Calu3 (cell line): ENCODE measurements at regions of chr19 and their contacts with region 1.

Region 1: DNA sequence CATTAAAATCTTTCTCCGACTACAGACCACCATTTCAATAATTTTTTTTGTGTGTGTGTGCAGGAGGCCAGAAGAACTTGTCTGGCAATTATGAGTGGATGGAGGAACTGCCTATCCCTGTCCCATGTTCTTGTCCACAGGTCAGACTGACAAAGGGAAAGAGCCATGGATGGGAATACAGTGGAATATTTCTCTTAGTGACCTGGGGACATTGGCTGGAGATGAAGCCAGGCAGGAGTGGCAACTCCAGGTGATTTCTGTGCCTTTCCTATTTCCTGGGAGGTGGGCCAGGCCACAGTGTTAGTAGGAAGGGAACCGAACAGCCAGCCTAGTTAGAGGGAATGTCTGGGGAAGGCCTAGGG is 3.7 kb downstream of the PSG9 start:
- DNase-seq: peak; percentile 22
- H3K4me3 Mint-ChIP-seq: peak overlapping the region; percentile 59
- H3K27ac Mint-ChIP-seq: peak overlapping the region; percentile 100
- H3K4me1 Mint-ChIP-seq: peaks cover 77% of the 10 kb centered on the region
- H3K27me3 Mint-ChIP-seq: no peaks in the 10 kb centered on the region
- CTCF ChIP-seq: no peak

Region 2: GRCh38 chr19:43207991-43208390 is 57.7 kb before region 1 on chr19:
- CTCF ChIA-PET with region 1: no interaction called
- intact Hi-C with region 1: loop called (anchors 10 kb)
- DNase-seq: no peak
- H3K4me3 Mint-ChIP-seq: no peak overlapping the region
- H3K27ac Mint-ChIP-seq: no peak overlapping the region
- H3K4me1 Mint-ChIP-seq: peaks cover 53% of the 10 kb centered on the region
- H3K27me3 Mint-ChIP-seq: no peaks in the 10 kb centered on the region
- CTCF ChIP-seq: no peak

Region 3: GRCh38 chr19:43229315-43229714 is 36.3 kb before region 1 on chr19:
- CTCF ChIA-PET with region 1: no interaction called
- intact Hi-C with region 1: loop called (anchors 2 kb)
- DNase-seq: no peak
- H3K4me3 Mint-ChIP-seq: no peak overlapping the region
- H3K27ac Mint-ChIP-seq: no peak overlapping the region
- H3K4me1 Mint-ChIP-seq: no peaks in the 10 kb centered on the region
- H3K27me3 Mint-ChIP-seq: no peaks in the 10 kb centered on the region
- CTCF ChIP-seq: no peak

Region 4: DNA sequence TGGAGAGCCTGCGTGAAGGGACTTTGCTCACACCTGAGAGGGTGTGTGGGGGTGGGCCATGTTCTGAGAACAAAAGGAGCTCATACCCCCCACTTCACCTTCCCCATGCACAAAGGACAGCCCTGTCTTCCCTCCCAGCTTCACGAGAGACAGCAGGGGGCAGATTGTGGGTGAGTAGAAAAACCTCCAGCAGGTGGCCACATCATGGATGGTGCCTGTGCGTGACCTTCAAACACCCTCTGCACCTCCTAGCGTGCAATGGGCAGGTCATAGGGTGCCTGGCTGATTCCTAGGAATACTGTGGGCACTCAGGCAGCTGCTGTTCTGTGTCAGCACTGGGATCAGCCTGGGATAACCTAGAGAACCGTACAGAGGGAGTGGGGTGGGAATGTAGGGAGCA is 40.0 kb after region 1 on chr19:
- CTCF ChIA-PET with region 1: no interaction called
- intact Hi-C with region 1: no loop called
- DNase-seq: no peak
- H3K4me3 Mint-ChIP-seq: no peak overlapping the region
- H3K27ac Mint-ChIP-seq: no peak overlapping the region
- H3K4me1 Mint-ChIP-seq: no peaks in the 10 kb centered on the region
- H3K27me3 Mint-ChIP-seq: peaks cover 31% of the 10 kb centered on the region
- CTCF ChIP-seq: no peak